ENCODE measurements at regions of chr13 and their contacts with region 1.

Region 1: GRCh38 chr13:32669030-32669646 is 82.9 kb downstream of the PDS5B start:
- DNase-seq: peak in 3 of 9 experiments; percentile 7 to 70 (median 59)
- ATAC-seq: peak; percentile 76
- H3K4me3 ChIP-seq: no peak overlapping the region
- H3K4me3 Mint-ChIP-seq: no peak overlapping the region
- H3K27ac ChIP-seq: no peak overlapping the region
- H3K27ac Mint-ChIP-seq: no peak overlapping the region
- H3K4me1 ChIP-seq: no peaks in the 10 kb centered on the region
- H3K4me1 Mint-ChIP-seq: peaks cover 14% of the 10 kb centered on the region
- H3K27me3 ChIP-seq: no peaks in the 10 kb centered on the region
- H3K27me3 Mint-ChIP-seq: no peaks in the 10 kb centered on the region
- CTCF ChIP-seq: peak; percentile 60

Region 2: DNA sequence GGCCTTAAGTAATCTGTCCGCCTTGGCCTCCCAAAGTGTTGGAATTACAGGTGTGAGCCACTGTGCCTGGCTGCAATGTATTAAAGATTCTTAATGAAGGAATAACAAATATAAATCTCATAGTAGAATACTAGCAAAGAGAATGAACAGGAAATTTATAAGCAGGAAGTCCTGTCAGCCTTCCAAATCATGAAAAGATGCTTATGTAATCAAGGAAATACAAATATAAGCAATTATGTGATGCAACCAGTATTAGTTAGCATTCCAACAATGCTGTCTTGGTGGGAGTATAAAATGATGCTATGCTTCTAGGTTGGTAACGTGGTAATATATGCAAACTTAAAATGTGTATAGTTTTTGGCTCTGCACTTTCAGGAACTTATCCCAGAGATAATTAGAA is 50.9 kb after region 1 on chr13:
- CTCF ChIA-PET with region 1: no interaction called
- POLR2A ChIA-PET with region 1: no interaction called
- intact Hi-C with region 1: no loop called
- DNase-seq: no peak
- ATAC-seq: no peak
- H3K4me3 ChIP-seq: no peak overlapping the region
- H3K4me3 Mint-ChIP-seq: no peak overlapping the region
- H3K27ac ChIP-seq: no peak overlapping the region
- H3K27ac Mint-ChIP-seq: no peak overlapping the region
- H3K4me1 ChIP-seq: no peaks in the 10 kb centered on the region
- H3K4me1 Mint-ChIP-seq: peaks cover 11% of the 10 kb centered on the region
- H3K27me3 ChIP-seq: no peaks in the 10 kb centered on the region
- H3K27me3 Mint-ChIP-seq: no peaks in the 10 kb centered on the region
- CTCF ChIP-seq: no peak

Region 3: GRCh38 chr13:32911506-32911905 is 242.4 kb after region 1 on chr13:
- CTCF ChIA-PET with region 1: no interaction called
- POLR2A ChIA-PET with region 1: no interaction called
- intact Hi-C with region 1: loop called in 1 of 2 experiments (anchors 5 kb)
- DNase-seq: peak in 2 of 9 experiments; percentile 23 to 50
- ATAC-seq: no peak
- H3K4me3 ChIP-seq: no peak overlapping the region
- H3K4me3 Mint-ChIP-seq: no peak overlapping the region
- H3K27ac ChIP-seq: no peak overlapping the region
- H3K27ac Mint-ChIP-seq: no peak overlapping the region
- H3K4me1 ChIP-seq: no peaks in the 10 kb centered on the region
- H3K4me1 Mint-ChIP-seq: no peaks in the 10 kb centered on the region
- H3K27me3 ChIP-seq: peaks cover 0 to 2% of the 10 kb centered on the region in 2 experiments
- H3K27me3 Mint-ChIP-seq: peaks cover 4% of the 10 kb centered on the region
- CTCF ChIP-seq: no peak